Esophagus squamous epithelium (tissue), 5 donors: ENCODE measurements at regions of chr11 and their contacts with region 1.

Region 1: GRCh38 chr11:47184711-47185304 is 1.4 kb downstream of the PACSIN3 start:
- DNase-seq: no peak
- H3K4me3 ChIP-seq: peak overlapping the region; percentile 74 to 94 (median 78)
- H3K27ac ChIP-seq: peak overlapping the region; percentile 92 to 98 (median 98)
- H3K4me1 ChIP-seq: peaks cover 27 to 67% (median 30%) of the 10 kb centered on the region in 3 donors
- H3K27me3 ChIP-seq: peaks cover 0 to 17% (median 0%) of the 10 kb centered on the region in 4 donors
- CTCF ChIP-seq: no peak
- POLR2A ChIP-seq: no peak

Region 2: GRCh38 chr11:47216121-47216798 is 31.5 kb after region 1 on chr11:
- intact Hi-C with region 1: loop called (anchors 5 kb)
- DNase-seq: no peak
- H3K4me3 ChIP-seq: peak overlapping the region; percentile 60 to 77 (median 75)
- H3K27ac ChIP-seq: peak overlapping the region; percentile 93 to 99 (median 95)
- H3K4me1 ChIP-seq: peaks cover 21 to 82% (median 37%) of the 10 kb centered on the region in 3 donors
- H3K27me3 ChIP-seq: no peaks in the 10 kb centered on the region
- CTCF ChIP-seq: no peak
- POLR2A ChIP-seq: no peak

Region 3: DNA sequence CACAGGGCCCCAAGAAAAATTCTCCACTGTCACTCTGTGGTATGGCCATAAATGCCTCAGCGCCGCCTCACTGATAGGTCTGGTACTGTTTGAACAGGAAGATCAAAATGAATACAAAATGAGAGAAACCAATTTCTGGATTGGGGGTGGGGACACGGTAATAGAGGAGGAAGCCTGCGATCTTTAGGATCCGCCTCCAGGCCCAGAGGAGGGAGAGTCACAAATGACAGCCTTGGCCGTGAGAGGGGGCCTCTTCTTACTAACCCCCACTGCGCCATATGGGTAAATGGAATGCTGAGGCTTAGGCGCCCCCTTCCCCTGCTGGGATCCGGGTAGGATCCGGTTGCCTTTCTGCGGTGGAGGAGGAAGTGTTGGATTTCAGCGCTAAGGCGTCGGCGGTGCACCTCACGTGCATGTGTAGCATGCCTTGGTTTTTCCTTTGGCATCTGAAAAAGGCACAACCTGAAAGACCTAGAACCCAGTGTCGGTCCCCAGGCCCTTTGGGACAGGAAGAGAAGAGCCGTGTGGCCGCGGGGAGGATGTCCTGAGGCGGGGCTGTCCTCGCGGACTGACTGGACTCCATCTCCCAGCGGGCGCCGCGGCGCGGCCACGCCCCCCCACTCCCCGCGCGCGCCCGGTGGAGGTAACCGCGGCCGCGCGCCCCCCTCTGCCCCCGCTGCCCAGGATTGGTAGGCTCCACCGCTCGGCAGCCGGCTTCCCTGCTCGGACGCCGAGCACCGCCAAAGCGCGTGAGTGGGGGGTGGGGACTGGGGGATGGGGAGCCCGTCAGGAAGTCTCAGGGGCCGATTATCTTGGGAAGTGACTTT is 84.4 kb after region 1 on chr11:
- intact Hi-C with region 1: loop called (anchors 5 kb)
- DNase-seq: peak; percentile 43
- H3K4me3 ChIP-seq: peak overlapping the region; percentile 73 to 96 (median 87)
- H3K27ac ChIP-seq: peak overlapping the region; percentile 93 to 98 (median 95)
- H3K4me1 ChIP-seq: peaks cover 8 to 64% (median 28%) of the 10 kb centered on the region in 3 donors
- H3K27me3 ChIP-seq: no peaks in the 10 kb centered on the region
- CTCF ChIP-seq: peak in 3 of 6 experiments; percentile 24 to 34 (median 26)
- POLR2A ChIP-seq: peak in 1 of 4 donors; percentile 20